K562 (cell line): ENCODE measurements at regions of chr10 and their contacts with region 1.

Region 1: GRCh38 chr10:70558871-70559810 is 43.4 kb downstream of the PRF1 start:
- DNase-seq: peak; percentile 91 to 94 (median 93)
- ATAC-seq: peak; percentile 94
- H3K4me3 ChIP-seq: peak overlapping the region; percentile 31
- H3K27ac ChIP-seq: peak overlapping the region; percentile 76
- H3K4me1 ChIP-seq: peaks cover 25 to 54% of the 10 kb centered on the region in 2 experiments
- H3K27me3 ChIP-seq: no peaks in the 10 kb centered on the region
- CTCF ChIP-seq: peak; percentile 82 to 93 (median 88)
- EP300 ChIP-seq: peak; percentile 89
- POLR2A ChIP-seq: no peak
- RAD21 ChIP-seq: peak; percentile 83 to 87

Region 2: GRCh38 chr10:70575874-70576802 is 17.0 kb after region 1 on chr10:
- CTCF ChIA-PET with region 1: no interaction called
- POLR2A ChIA-PET with region 1: interaction called, 13 read pairs
- in situ Hi-C with region 1: no loop called
- intact Hi-C with region 1: loop called (anchors 1 kb)
- DNase-seq: peak; percentile 64 to 92 (median 78)
- ATAC-seq: peak; percentile 92
- H3K4me3 ChIP-seq: no peak overlapping the region
- H3K27ac ChIP-seq: peak overlapping the region; percentile 70
- H3K4me1 ChIP-seq: peaks cover 40 to 57% of the 10 kb centered on the region in 2 experiments
- H3K27me3 ChIP-seq: no peaks in the 10 kb centered on the region
- CTCF ChIP-seq: no peak
- EP300 ChIP-seq: peak; percentile 86
- POLR2A ChIP-seq: no peak
- RAD21 ChIP-seq: no peak; a peak in 2 of 4 replicates

Region 3: DNA sequence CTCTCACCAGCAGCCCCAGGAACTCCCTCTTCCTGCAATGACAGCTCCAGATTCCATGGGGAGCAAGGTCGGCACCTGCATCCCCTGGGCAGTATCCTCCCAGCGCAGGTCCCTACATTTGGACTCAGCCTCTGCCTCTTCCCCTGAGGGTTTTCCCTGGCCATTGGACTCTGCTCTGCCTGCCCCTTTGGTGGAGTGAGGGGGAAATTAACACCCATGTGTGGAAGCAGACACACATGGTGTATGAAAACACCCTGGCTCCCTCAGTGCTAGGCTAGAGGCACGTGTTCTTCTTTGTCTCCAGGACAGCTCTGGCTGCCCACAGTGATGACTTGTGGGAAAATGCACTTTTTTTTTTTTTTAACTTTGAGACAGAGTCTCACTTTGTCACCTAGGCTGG is 35.0 kb after region 1 on chr10:
- CTCF ChIA-PET with region 1: no interaction called
- POLR2A ChIA-PET with region 1: interaction called, 3 read pairs
- in situ Hi-C with region 1: no loop called
- intact Hi-C with region 1: loop called (anchors 2 kb)
- DNase-seq: no peak
- ATAC-seq: no peak
- H3K4me3 ChIP-seq: no peak overlapping the region
- H3K27ac ChIP-seq: no peak overlapping the region
- H3K4me1 ChIP-seq: peaks cover 61 to 62% of the 10 kb centered on the region in 2 experiments
- H3K27me3 ChIP-seq: no peaks in the 10 kb centered on the region
- CTCF ChIP-seq: no peak
- EP300 ChIP-seq: no peak
- POLR2A ChIP-seq: no peak
- RAD21 ChIP-seq: no peak

Region 4: DNA sequence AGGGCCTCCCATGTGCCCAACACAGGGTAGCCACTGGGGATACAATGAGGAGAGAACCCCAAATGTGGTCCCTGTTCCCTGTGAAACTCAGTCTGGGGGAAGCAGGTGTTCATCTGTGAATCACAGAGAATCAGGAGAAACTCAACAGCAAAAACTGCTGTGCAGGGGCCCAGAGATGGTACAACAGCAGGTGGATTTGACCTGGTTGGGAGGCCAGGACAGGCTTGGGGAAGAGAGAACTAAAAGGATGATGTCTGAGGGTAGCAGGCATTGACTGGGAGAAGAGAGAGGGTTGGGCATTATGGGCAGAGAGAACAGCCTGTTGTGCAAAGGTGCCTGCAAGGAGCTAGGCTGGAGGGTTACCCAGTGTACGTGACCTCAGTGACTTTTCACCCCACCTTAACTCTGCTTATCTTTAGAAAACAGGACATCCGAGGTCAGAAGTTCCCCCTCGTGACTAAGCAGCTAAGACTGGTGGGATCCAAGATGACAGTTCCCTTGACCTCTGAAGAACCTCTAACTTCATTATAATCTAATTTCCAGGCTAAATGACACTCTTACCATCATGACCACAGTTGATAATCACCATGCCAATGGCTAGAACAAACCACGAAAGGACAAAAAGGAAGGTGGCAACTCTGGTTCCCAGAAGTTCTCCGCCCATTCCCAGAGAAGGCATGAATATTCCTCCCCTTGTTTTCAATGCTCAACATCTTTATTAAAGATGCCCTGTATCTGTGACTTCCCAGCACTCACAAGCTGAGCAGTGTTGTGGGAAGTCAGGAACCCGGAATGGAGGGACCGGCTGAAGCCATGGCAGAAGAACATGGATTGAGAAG is 108.0 kb after region 1 on chr10:
- CTCF ChIA-PET with region 1: interaction called, 3 read pairs
- POLR2A ChIA-PET with region 1: interaction called, 4 read pairs
- in situ Hi-C with region 1: no loop called
- intact Hi-C with region 1: loop called (anchors 2 kb)
- DNase-seq: peak; percentile 90 to 98 (median 94)
- ATAC-seq: peak; percentile 65
- H3K4me3 ChIP-seq: no peak overlapping the region
- H3K27ac ChIP-seq: peak overlapping the region; percentile 82
- H3K4me1 ChIP-seq: peaks cover 72 to 91% of the 10 kb centered on the region in 2 experiments
- H3K27me3 ChIP-seq: no peaks in the 10 kb centered on the region
- CTCF ChIP-seq: no peak
- EP300 ChIP-seq: peak; percentile 100
- POLR2A ChIP-seq: peak; percentile 76
- RAD21 ChIP-seq: peak in 1 of 2 experiments; percentile 26; a peak in 2 of 4 replicates